Motor neuron (in vitro differentiated cells): ENCODE measurements at regions of chr5 and their contacts with region 1.

Region 1: DNA sequence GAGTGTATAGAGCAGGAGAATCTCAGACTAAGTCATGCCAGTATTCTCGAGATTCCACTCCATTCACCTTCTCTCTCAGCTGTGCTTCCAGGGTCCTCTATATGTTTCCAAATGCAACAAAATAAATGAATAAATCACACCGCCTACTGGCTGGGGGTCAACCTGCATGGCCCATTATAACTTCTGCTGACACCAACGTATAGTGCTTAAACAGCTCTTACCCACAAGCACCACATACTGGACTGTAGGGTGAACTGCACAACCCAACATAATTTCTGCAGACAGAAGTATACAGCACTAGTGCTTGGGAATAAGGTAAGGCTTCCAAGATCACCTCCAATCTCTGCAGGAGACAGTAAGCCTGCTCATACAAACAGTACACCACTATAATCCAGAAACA is 33.1 kb upstream of the HTR4 start:
- ATAC-seq: peak in 3 of 8 experiments; percentile 85 to 94 (median 93)
- H3K4me3 ChIP-seq: no peak overlapping the region
- H3K27ac ChIP-seq: no peak overlapping the region
- H3K4me1 ChIP-seq: no peaks in the 10 kb centered on the region

Region 2: GRCh38 chr5:147734894-147735293 is 952.5 kb before region 1 on chr5:
- in situ Hi-C with region 1: no loop called
- ATAC-seq: no peak
- H3K4me3 ChIP-seq: no peak overlapping the region
- H3K27ac ChIP-seq: no peak overlapping the region
- H3K4me1 ChIP-seq: peaks cover 7 to 12% of the 10 kb centered on the region in 2 donors

Region 3: DNA sequence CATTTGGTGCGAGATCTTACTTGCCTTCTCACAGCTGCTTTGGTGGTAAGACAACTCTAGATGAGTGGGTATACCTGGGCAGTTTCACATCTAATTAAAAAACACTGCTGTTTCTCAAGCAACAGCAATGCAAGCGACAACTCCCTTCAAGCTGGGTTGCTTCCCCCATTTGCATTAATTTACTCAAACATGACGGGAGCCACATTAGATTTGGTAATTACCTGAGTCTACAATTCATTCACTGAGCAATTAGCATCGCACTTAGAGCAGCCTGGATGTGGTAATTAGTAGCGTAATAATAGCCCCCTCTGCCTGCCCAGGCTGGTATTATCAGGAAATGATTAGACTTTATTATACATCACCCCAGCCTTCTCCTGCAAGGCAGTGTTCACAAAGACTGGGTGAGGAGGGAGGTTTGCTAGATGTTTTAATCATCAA is 230.2 kb before region 1 on chr5:
- in situ Hi-C with region 1: loop called in 1 of 9 experiments (anchors 25 kb)
- ATAC-seq: peak in 3 of 8 experiments; percentile 60 to 89 (median 73)
- H3K4me3 ChIP-seq: no peak overlapping the region
- H3K27ac ChIP-seq: no peak overlapping the region
- H3K4me1 ChIP-seq: peaks cover 0 to 2% of the 10 kb centered on the region in 2 donors

Region 4: GRCh38 chr5:148491015-148491792 is 196.2 kb before region 1 on chr5:
- in situ Hi-C with region 1: no loop called
- ATAC-seq: no peak
- H3K4me3 ChIP-seq: no peak overlapping the region
- H3K27ac ChIP-seq: no peak overlapping the region
- H3K4me1 ChIP-seq: no peaks in the 10 kb centered on the region